OCI-LY7 (cell line): ENCODE measurements at regions of chr3 and their contacts with region 1.

Region 1: GRCh38 chr3:187210545-187211327 is 13.4 kb downstream of the RTP1 start:
- DNase-seq: no peak
- H3K4me3 ChIP-seq: no peak overlapping the region
- H3K27ac ChIP-seq: no peak overlapping the region
- H3K4me1 ChIP-seq: no peaks in the 10 kb centered on the region
- CTCF ChIP-seq: no peak

Region 2: DNA sequence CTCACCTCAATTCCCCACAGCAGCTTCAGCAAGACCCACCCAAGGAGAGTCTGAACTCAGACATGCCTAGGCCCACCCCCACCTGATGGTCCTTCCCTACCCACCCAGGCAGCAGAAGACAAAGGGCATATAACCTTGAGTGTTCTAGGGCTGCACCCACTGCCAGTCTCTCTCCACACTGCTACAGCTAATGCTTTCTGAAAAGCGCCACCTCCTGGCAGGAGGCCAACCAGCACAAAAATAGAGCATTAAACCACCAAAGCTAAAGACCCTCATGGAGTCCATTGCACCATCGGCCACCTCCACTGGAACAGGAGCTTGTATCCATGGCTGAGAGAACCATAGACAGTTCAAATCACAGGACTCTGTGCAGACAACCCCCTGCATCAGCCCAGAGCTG is 60.1 kb before region 1 on chr3:
- CTCF ChIA-PET with region 1: no interaction called
- POLR2A ChIA-PET with region 1: no interaction called
- intact Hi-C with region 1: no loop called
- DNase-seq: peak; percentile 64
- H3K4me3 ChIP-seq: no peak overlapping the region
- H3K27ac ChIP-seq: no peak overlapping the region
- H3K4me1 ChIP-seq: no peaks in the 10 kb centered on the region
- CTCF ChIP-seq: peak; percentile 76

Region 3: GRCh38 chr3:187197057-187197649 is 13.6 kb before region 1 on chr3 and contains the start of gene RTP1:
- CTCF ChIA-PET with region 1: interaction called, 3 read pairs
- POLR2A ChIA-PET with region 1: interaction called, 12 read pairs
- intact Hi-C with region 1: no loop called
- DNase-seq: no peak
- H3K4me3 ChIP-seq: no peak within 1 kb of the TSS
- H3K27ac ChIP-seq: no peak within 1 kb of the TSS
- H3K4me1 ChIP-seq: peaks cover 13% of the 10 kb centered on the region
- CTCF ChIP-seq: no peak
- total RNA-seq, gene RTP1: not detected in 2 replicates